ENCODE measurements at regions of chr20 and their contacts with region 1.

Region 1: GRCh38 chr20:57089691-57090150 is 176.7 kb downstream of the BMP7 start:
- DNase-seq: peak; percentile 43 to 84 (median 62)
- ATAC-seq: peak; percentile 73 to 90 (median 84)
- H3K4me3 ChIP-seq: no peak overlapping the region
- H3K27ac ChIP-seq: no peak overlapping the region
- H3K4me1 ChIP-seq: peaks cover 0 to 8% (median 0%) of the 10 kb centered on the region in 12 donors
- H3K27me3 ChIP-seq: peaks cover 0 to 29% (median 3%) of the 10 kb centered on the region in 9 donors
- CTCF ChIP-seq: peak; percentile 68 to 93 (median 84)
- POLR2A ChIP-seq: no peak

Region 2: DNA sequence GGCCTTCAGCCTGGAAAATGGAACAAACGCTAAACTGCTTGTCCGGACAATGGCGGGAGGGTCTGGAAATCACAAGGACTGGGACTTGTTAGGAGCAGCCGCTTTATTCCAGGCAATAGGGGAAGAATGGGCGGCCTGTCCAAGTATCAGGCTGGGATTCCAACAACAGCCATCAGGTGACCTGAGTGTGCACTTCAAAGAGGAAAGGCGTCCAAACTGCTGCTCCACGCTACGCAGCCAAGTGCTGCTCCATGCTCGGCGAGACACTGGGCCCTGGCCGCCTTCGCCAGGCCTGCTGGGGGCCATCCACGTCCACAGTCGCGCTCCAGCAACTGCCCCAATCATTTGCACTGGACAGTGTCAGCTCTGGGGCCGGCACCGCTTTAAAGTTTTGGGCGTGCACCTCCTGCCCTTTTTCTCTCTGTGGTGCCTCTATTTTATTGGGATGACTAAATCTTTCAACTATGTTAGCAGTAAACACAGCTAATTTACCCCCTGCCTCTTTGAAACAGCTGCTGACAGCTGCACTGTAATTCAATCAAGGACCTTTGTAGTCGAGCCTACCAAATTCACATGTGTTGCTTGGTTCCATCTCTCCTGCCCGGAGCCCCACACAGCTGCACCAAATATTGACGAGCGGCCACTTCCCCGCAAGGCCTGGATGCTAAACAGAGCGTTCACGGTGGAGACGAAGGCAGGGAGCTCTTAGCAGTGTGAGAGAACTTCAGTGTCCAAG is 78.4 kb after region 1 on chr20:
- intact Hi-C with region 1: loop called in 1 of 10 experiments (anchors 5 kb)
- DNase-seq: peak in 2 of 5 donors; percentile 25 to 58
- ATAC-seq: peak; percentile 71 to 90 (median 75)
- H3K4me3 ChIP-seq: no peak overlapping the region
- H3K27ac ChIP-seq: peak overlapping the region; percentile 29 to 85 (median 60)
- H3K4me1 ChIP-seq: peaks cover 0 to 14% (median 0%) of the 10 kb centered on the region in 12 donors
- H3K27me3 ChIP-seq: no peaks in the 10 kb centered on the region
- CTCF ChIP-seq: no peak
- POLR2A ChIP-seq: no peak

Region 3: DNA sequence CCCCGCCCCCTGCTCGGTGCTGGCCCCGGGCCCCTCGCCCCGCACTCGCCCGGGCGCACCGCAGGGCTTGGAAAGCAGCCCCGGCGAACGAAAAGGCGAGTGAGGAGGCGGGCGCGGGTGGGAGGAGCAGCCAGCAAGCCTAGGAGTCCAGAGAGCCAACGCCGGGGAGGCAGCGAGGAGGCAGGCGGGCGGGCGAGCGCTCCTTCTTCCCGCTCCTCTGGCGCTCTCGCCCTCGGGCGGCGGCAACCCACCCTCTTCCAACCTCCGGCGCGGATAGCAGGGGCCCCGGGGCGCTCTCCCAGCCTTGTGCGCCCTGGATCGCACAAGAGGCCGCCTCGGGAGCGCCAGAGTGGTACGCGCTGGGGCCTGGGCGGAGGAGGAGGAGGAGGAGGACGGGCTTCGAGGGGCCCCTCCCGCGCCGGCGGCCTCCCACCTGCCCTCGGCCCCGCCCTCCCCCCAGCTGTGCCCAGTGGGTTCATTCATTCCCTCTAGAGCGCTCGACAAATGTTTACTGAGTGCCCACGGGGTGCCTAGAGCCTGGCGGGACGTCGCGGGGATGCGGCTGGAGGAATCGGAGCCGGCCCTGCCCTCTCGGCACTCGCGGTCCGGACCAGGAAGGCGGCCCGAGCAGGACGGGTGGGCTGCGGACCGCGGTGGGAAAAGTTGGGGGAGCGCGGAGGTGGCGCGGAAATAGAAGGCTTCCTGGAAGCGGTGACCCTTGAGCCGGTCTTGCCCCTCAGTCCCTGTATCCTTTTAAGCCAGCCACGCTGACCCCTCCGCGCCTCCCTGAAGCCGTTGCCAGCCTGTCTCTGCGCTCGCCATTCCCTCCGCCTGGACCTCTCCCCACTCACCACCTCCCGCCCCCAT is 176.8 kb after region 1 on chr20 and contains the start of gene BMP7:
- intact Hi-C with region 1: loop called in 2 of 10 experiments (anchors 5 to 10 kb)
- DNase-seq: no peak
- ATAC-seq: peak in 1 of 4 donors; percentile 36
- H3K4me3 ChIP-seq: peak within 1 kb of the TSS in 10 of 12 donors; percentile 15 to 52 (median 24)
- H3K27ac ChIP-seq: peak within 1 kb of the TSS in 1 of 12 donors; percentile 27
- H3K4me1 ChIP-seq: peaks cover 0 to 25% (median 0%) of the 10 kb centered on the region in 12 donors
- H3K27me3 ChIP-seq: peaks cover 25 to 87% (median 41%) of the 10 kb centered on the region in 9 donors
- CTCF ChIP-seq: no peak
- POLR2A ChIP-seq: no peak
- total RNA-seq, gene BMP7: 0.72 to 12.3 (median 3.7) TPM

Region 4: DNA sequence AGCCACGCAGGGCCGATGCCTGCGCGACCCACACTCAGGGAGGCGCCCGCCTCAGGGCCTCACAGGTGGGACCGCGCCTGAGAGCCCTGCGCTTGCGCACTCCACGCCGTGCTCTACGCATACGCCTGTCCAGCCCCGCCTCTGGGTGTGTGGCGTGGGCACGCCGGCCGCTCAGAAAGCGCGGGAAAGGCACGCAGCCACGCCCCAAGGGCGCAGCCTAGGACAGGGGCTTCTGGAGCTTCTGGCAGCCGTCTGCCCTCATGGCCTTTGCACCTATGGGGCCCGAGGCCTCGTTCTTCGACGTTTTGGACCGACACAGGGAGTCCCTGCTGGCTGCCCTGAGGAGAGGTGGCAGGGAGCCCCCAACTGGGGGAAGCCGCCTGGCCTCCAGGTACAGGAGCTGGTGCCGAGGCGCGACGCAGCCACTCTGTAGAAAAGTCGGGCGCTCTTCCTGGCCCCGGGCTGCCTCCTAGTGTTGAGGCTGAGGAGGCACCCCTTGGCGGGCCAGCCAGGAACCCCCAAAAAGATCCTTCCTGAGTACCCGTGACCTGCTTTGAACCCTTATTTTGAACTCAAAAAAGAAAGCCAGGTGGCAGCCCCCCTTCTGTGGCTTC is 240.0 kb after region 1 on chr20 and contains the start of gene SPO11:
- intact Hi-C with region 1: loop called in 2 of 10 experiments (anchors 5 kb)
- DNase-seq: no peak
- ATAC-seq: peak in 2 of 4 donors; percentile 45 to 54
- H3K4me3 ChIP-seq: no peak within 1 kb of the TSS
- H3K27ac ChIP-seq: no peak within 1 kb of the TSS
- H3K4me1 ChIP-seq: no peaks in the 10 kb centered on the region
- H3K27me3 ChIP-seq: peaks cover 0 to 65% (median 10%) of the 10 kb centered on the region in 9 donors
- CTCF ChIP-seq: peak in 8 of 12 donors; percentile 10 to 31 (median 18)
- POLR2A ChIP-seq: no peak
- total RNA-seq, gene SPO11: not detected

Region 5: GRCh38 chr20:57346477-57346876 is 256.8 kb after region 1 on chr20:
- intact Hi-C with region 1: loop called (anchors 1 to 5 kb)
- DNase-seq: peak; percentile 47 to 76 (median 65)
- ATAC-seq: peak; percentile 44 to 56 (median 50)
- H3K4me3 ChIP-seq: no peak overlapping the region
- H3K27ac ChIP-seq: no peak overlapping the region
- H3K4me1 ChIP-seq: peaks cover 0 to 4% (median 0%) of the 10 kb centered on the region in 12 donors
- H3K27me3 ChIP-seq: peaks cover 0 to 8% (median 0%) of the 10 kb centered on the region in 9 donors
- CTCF ChIP-seq: peak; percentile 56 to 82 (median 72)
- POLR2A ChIP-seq: no peak

Region 6: DNA sequence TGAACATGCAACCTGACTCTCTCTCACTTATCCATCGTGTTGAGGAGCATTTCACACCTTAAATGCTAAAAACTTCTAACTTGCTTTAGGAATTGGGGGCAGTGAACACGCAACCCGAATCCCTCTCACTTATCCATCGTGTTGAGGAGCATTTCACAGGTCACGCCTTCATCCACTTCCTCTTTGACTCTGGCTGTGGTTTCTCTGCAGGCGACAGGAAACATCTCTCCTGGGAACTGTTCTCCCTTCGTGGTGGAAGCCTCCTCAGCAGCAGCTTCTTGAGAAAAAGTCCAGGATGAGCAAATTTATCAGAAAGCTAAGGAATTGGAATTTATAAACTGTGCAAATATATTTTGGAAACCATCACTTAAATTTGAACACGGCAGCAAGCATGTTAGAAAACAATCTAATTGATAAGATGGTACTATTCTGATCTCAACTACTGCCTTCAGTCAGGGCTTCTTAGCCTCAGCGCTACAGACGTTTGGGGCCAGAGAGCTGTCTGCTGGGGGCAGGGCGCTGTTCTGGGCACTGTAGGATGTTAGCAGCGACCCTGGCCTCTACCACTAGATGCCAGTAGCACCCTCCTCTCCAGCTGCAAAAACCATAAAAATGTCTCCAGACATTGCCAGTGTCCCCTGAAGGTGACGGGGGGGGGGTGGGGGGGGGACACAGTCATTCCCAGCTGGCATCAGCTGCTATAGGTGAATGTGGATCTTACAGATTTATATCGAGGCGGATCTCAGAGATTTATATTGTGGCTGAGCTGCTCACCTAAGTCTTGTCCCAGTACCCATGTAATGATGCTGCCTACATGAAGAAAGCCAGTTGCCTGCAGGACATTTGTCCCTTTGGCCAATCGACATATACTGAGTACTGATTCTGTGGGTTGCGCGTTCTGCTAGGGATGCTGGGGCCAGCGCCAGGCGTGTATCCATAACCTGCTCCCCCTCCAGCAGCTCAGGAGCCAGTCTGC is 409.0 kb after region 1 on chr20:
- intact Hi-C with region 1: loop called in 1 of 10 experiments (anchors 10 kb)
- DNase-seq: peak in 1 of 5 donors; percentile 49
- ATAC-seq: peak in 3 of 4 donors; percentile 53 to 73 (median 69)
- H3K4me3 ChIP-seq: no peak overlapping the region
- H3K27ac ChIP-seq: no peak overlapping the region
- H3K4me1 ChIP-seq: peaks cover 0 to 30% (median 8%) of the 10 kb centered on the region in 12 donors
- H3K27me3 ChIP-seq: peaks cover 0 to 37% (median 0%) of the 10 kb centered on the region in 9 donors
- CTCF ChIP-seq: peak in 7 of 12 donors; percentile 5 to 35 (median 21)
- POLR2A ChIP-seq: no peak